ENCODE measurements at regions of chr11 and their contacts with region 1.

Region 1: GRCh38 chr11:130359419-130359818 is 44.7 kb upstream of the ZBTB44 start:
- DNase-seq: no peak
- H3K27ac ChIP-seq: no peak overlapping the region
- CTCF ChIP-seq: no peak

Region 2: GRCh38 chr11:129881570-129882170 is 477.7 kb before region 1 on chr11:
- CTCF ChIA-PET with region 1: interaction called, 10 read pairs
- POLR2A ChIA-PET with region 1: no interaction called
- DNase-seq: peak; percentile 51
- H3K27ac ChIP-seq: no peak overlapping the region
- CTCF ChIP-seq: peak; percentile 44

Region 3: GRCh38 chr11:130344846-130345245 is 14.6 kb before region 1 on chr11:
- CTCF ChIA-PET with region 1: no interaction called
- POLR2A ChIA-PET with region 1: no interaction called
- DNase-seq: no peak
- H3K27ac ChIP-seq: no peak overlapping the region
- CTCF ChIP-seq: no peak

Region 4: GRCh38 chr11:130370845-130371590 is 11.6 kb after region 1 on chr11:
- CTCF ChIA-PET with region 1: no interaction called
- POLR2A ChIA-PET with region 1: no interaction called
- DNase-seq: no peak
- H3K27ac ChIP-seq: no peak overlapping the region
- CTCF ChIP-seq: no peak